ENCODE measurements at regions of chr7 and their contacts with region 1.

Region 1: GRCh38 chr7:47818796-47819606 is 129.3 kb downstream of the PKD1L1 start:
- DNase-seq: peak; percentile 66 to 82
- H3K4me3 ChIP-seq: no peak overlapping the region
- H3K4me3 Mint-ChIP-seq: no peak overlapping the region
- H3K27ac Mint-ChIP-seq: no peak overlapping the region
- H3K4me1 ChIP-seq: peaks cover 15% of the 10 kb centered on the region
- H3K4me1 Mint-ChIP-seq: peaks cover 26% of the 10 kb centered on the region
- H3K27me3 ChIP-seq: no peaks in the 10 kb centered on the region
- H3K27me3 Mint-ChIP-seq: no peaks in the 10 kb centered on the region
- CTCF ChIP-seq: peak; percentile 96 to 98

Region 2: GRCh38 chr7:47418601-47419381 is 400.2 kb before region 1 on chr7:
- CTCF ChIA-PET with region 1: no interaction called
- POLR2A ChIA-PET with region 1: no interaction called
- intact Hi-C with region 1: loop called (anchors 5 kb)
- DNase-seq: peak in 1 of 2 experiments; percentile 12
- H3K4me3 ChIP-seq: no peak overlapping the region
- H3K4me3 Mint-ChIP-seq: no peak overlapping the region
- H3K27ac Mint-ChIP-seq: peak overlapping the region; percentile 31
- H3K4me1 ChIP-seq: no peaks in the 10 kb centered on the region
- H3K4me1 Mint-ChIP-seq: no peaks in the 10 kb centered on the region
- H3K27me3 ChIP-seq: no peaks in the 10 kb centered on the region
- H3K27me3 Mint-ChIP-seq: no peaks in the 10 kb centered on the region
- CTCF ChIP-seq: no peak

Region 3: GRCh38 chr7:47474937-47475878 is 343.8 kb before region 1 on chr7:
- CTCF ChIA-PET with region 1: interaction called, 3 read pairs
- POLR2A ChIA-PET with region 1: no interaction called
- intact Hi-C with region 1: loop called (anchors 5 kb)
- DNase-seq: peak; percentile 84 to 92
- H3K4me3 ChIP-seq: no peak overlapping the region
- H3K4me3 Mint-ChIP-seq: no peak overlapping the region
- H3K27ac Mint-ChIP-seq: no peak overlapping the region
- H3K4me1 ChIP-seq: peaks cover 63% of the 10 kb centered on the region
- H3K4me1 Mint-ChIP-seq: peaks cover 32% of the 10 kb centered on the region
- H3K27me3 ChIP-seq: no peaks in the 10 kb centered on the region
- H3K27me3 Mint-ChIP-seq: no peaks in the 10 kb centered on the region
- CTCF ChIP-seq: no peak

Region 4: DNA sequence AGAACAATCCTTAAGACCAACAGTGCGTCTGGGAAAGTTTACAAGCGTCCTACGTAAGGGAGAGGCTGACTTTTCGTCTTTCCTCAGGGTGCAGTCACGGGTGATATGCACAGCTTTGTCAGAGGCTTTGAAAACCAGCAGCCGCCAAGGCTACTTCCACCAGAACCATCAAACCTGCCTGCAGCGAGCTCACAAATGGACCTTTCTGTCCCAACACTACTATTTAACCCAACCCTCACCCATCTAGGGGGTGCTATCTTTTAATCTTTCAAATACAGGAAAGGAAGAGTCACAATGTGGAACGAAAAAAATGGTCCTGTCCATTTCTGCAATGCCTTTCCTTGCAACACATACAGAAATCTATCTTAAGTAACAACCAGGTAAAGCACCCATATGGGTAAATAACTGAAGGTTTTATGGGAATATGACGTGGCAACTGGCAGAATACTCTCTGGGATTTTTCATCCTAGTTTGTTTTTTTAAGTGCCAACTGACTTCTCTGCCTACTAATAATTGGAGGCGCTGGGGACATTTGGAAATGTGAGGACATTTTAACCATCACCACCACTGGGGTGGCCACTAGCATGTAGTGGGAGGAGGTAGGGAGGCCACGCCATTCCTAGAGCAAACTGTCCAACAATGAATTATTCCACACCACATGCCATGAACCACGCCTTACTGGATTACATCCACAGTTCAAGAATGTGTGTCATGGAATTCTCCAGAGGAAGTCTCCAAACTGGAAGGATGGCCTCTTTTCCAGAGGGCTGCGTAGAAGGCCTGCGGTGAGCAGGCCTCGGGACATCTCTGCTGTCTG is 261.6 kb before region 1 on chr7:
- CTCF ChIA-PET with region 1: no interaction called
- POLR2A ChIA-PET with region 1: no interaction called
- intact Hi-C with region 1: loop called (anchors 1 kb)
- DNase-seq: no peak
- H3K4me3 ChIP-seq: no peak overlapping the region
- H3K4me3 Mint-ChIP-seq: peak overlapping the region; percentile 37
- H3K27ac Mint-ChIP-seq: peak overlapping the region; percentile 92
- H3K4me1 ChIP-seq: peaks cover 81% of the 10 kb centered on the region
- H3K4me1 Mint-ChIP-seq: peaks cover 61% of the 10 kb centered on the region
- H3K27me3 ChIP-seq: no peaks in the 10 kb centered on the region
- H3K27me3 Mint-ChIP-seq: no peaks in the 10 kb centered on the region
- CTCF ChIP-seq: no peak

Region 5: GRCh38 chr7:47610506-47611044 is 208.4 kb before region 1 on chr7:
- CTCF ChIA-PET with region 1: interaction called, 10 read pairs
- POLR2A ChIA-PET with region 1: no interaction called
- intact Hi-C with region 1: no loop called
- DNase-seq: no peak
- H3K4me3 ChIP-seq: no peak overlapping the region
- H3K4me3 Mint-ChIP-seq: no peak overlapping the region
- H3K27ac Mint-ChIP-seq: peak overlapping the region; percentile 72
- H3K4me1 ChIP-seq: peaks cover 47% of the 10 kb centered on the region
- H3K4me1 Mint-ChIP-seq: peaks cover 33% of the 10 kb centered on the region
- H3K27me3 ChIP-seq: no peaks in the 10 kb centered on the region
- H3K27me3 Mint-ChIP-seq: no peaks in the 10 kb centered on the region
- CTCF ChIP-seq: no peak

Region 6: GRCh38 chr7:47778153-47778661 is 40.8 kb before region 1 on chr7:
- CTCF ChIA-PET with region 1: no interaction called
- POLR2A ChIA-PET with region 1: no interaction called
- intact Hi-C with region 1: loop called (anchors 5 kb)
- DNase-seq: peak in 1 of 2 experiments; percentile 63
- H3K4me3 ChIP-seq: no peak overlapping the region
- H3K4me3 Mint-ChIP-seq: no peak overlapping the region
- H3K27ac Mint-ChIP-seq: peak overlapping the region; percentile 71
- H3K4me1 ChIP-seq: peaks cover 83% of the 10 kb centered on the region
- H3K4me1 Mint-ChIP-seq: peaks cover 75% of the 10 kb centered on the region
- H3K27me3 ChIP-seq: no peaks in the 10 kb centered on the region
- H3K27me3 Mint-ChIP-seq: no peaks in the 10 kb centered on the region
- CTCF ChIP-seq: no peak